Sigmoid colon (tissue), 7 donors: ENCODE measurements at regions of chr7 and their contacts with region 1.

Region 1: GRCh38 chr7:7968543-7969305 is at the start of gene GLCCI1:
- DNase-seq: peak; percentile 98
- H3K4me3 ChIP-seq: peak within 1 kb of the TSS; percentile 87 to 95 (median 92)
- H3K27ac ChIP-seq: peak within 1 kb of the TSS; percentile 89 to 99 (median 97)
- H3K4me1 ChIP-seq: peaks cover 0 to 18% (median 7%) of the 10 kb centered on the region in 4 donors
- H3K27me3 ChIP-seq: no peaks in the 10 kb centered on the region
- CTCF ChIP-seq: no peak
- EP300 ChIP-seq: no peak
- POLR2A ChIP-seq: peak; percentile 58 to 79
- total RNA-seq, gene GLCCI1: 3.8 to 17.7 (median 10.6) TPM

Region 2: DNA sequence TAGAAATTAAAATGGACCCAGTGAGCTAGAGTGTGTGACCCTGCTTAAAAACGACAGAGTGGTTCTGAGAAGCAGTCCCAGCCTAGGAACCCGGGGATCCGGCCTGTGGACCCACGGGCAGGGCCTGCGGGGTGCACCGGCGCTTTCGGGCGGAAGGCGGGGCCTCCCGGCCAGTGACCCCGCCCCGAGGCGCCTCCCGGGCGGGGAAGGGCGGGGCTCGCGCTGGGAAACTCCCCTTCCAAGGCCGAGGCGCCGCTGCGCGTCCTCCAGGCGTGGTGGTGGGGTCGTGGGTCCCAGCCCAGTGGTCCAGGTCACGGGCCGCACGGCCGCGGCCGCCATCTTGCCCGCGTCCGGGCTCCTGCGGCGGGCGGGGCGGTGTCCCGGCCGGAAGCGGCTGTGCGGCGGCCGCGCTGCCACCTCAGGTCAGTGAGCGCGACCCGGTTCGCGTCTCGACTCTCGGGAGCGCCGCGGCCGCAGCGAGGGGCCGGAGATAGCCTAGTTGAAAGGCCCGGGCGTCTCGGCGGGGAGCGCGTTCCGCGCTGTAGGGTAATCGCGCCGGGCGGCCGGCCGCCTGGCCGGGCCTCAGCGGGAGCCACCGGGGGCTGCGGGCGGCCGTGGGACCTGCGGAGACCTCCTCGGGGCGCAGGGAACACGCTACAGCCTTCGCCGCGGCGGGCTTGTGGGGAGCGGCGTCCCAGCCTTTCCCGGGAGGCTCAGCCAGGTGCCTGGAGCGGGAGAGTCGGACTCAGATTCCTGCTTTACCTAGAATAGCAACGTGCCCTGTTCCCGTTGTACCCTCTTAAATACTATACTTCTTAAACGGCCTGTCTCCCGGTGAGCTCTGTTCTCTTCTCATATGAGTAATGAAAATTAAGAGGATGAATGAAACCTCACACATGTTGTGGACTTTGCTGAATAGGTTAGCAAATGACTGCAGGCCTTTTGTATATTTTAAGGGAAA is 401.8 kb before region 1 on chr7 and contains the start of gene MIOS:
- intact Hi-C with region 1: loop called (anchors 5 kb)
- DNase-seq: peak; percentile 92
- H3K4me3 ChIP-seq: peak within 1 kb of the TSS; percentile 52 to 88 (median 70)
- H3K27ac ChIP-seq: peak within 1 kb of the TSS; percentile 84 to 94 (median 91)
- H3K4me1 ChIP-seq: peaks cover 0 to 21% (median 16%) of the 10 kb centered on the region in 4 donors
- H3K27me3 ChIP-seq: no peaks in the 10 kb centered on the region
- CTCF ChIP-seq: no peak
- EP300 ChIP-seq: no peak
- POLR2A ChIP-seq: no peak
- total RNA-seq, gene MIOS: 20.8 to 40.3 (median 30.7) TPM

Region 3: DNA sequence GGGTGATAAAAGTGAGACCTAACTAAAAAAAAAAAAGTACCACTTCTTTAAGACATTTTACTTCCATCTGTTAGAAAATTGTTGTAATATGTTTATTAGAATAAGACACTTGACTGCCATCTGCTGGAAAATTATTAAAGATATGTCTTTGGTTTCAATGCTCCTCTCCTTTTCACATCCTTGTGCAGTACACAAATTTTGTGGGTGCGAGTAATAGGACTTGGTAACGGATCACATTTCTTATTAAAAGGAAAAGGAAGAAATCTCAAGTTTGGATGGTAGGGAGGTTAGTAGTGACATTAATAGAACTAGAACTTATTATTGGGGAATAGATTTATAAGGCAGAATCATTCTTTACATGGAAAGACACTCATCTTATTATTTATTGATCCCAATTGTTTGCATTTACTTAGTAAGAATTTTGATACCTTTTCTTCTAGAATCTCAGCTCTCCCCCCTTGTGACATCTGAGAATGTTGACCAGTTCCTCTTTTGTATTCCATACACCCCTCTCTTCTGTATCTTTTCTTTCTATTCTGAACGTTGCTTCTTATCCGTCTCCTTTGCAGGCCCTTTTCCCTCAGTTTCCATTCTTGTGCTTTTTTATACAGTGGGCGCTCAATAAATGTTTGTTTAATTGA is 207.3 kb before region 1 on chr7:
- intact Hi-C with region 1: no loop called
- DNase-seq: no peak
- H3K4me3 ChIP-seq: peak overlapping the region in 3 of 4 donors; percentile 36 to 48 (median 44)
- H3K27ac ChIP-seq: peak overlapping the region; percentile 58 to 72 (median 64)
- H3K4me1 ChIP-seq: peaks cover 0 to 37% (median 13%) of the 10 kb centered on the region in 4 donors
- H3K27me3 ChIP-seq: no peaks in the 10 kb centered on the region
- CTCF ChIP-seq: peak in 3 of 4 experiments; percentile 25 to 48 (median 30)
- EP300 ChIP-seq: no peak
- POLR2A ChIP-seq: no peak

Region 4: GRCh38 chr7:7795203-7796135 is 173.3 kb before region 1 on chr7:
- intact Hi-C with region 1: no loop called
- DNase-seq: no peak
- H3K4me3 ChIP-seq: no peak overlapping the region
- H3K27ac ChIP-seq: no peak overlapping the region
- H3K4me1 ChIP-seq: peaks cover 0 to 37% (median 24%) of the 10 kb centered on the region in 4 donors
- H3K27me3 ChIP-seq: no peaks in the 10 kb centered on the region
- CTCF ChIP-seq: no peak
- EP300 ChIP-seq: no peak
- POLR2A ChIP-seq: no peak

Region 5: GRCh38 chr7:8871716-8872115 is 903.0 kb after region 1 on chr7:
- intact Hi-C with region 1: no loop called
- DNase-seq: no peak
- H3K4me3 ChIP-seq: no peak overlapping the region
- H3K27ac ChIP-seq: no peak overlapping the region
- H3K4me1 ChIP-seq: no peaks in the 10 kb centered on the region
- H3K27me3 ChIP-seq: no peaks in the 10 kb centered on the region
- CTCF ChIP-seq: no peak
- EP300 ChIP-seq: no peak
- POLR2A ChIP-seq: no peak